ENCODE measurements at regions of chr9 and their contacts with region 1.

Region 1: DNA sequence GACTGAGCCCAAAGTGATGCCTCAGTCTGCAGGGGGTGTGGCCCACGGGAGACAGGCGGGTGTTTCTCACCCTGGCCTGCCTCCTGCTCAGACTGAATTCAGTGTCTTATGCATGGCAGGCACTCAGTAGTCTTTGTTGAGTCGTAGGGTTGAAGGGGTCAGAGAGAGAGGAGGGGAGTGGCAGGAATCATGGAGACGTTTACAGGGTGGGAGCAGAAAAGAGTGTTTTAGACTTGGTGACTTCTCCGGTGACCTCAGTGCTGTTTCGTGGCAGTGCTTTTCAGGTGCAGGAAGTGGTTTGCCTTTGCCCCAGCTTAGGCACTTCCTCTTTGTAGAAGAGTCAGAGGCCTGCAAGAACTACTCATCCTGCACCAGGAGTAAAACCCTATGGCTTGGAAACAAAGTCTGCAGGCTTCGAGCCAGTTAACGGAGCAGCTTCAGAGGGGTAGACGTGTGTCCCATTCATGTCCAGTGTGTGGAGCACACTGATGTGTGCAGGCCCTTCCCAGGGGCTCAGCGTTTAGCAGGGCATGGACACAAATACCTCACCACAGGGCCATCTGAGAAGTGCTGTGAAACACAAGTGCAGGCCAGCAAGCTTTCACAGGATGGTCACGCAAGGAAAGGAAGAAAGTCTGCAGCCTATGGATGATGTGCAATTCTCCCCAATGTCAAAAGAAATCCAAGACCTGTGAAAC is 24.5 kb upstream of the SEMA4D start:
- DNase-seq: peak; percentile 68
- ATAC-seq: peak; percentile 87
- H3K4me3 Mint-ChIP-seq: peak overlapping the region; percentile 74
- H3K27ac Mint-ChIP-seq: peak overlapping the region; percentile 98
- H3K4me1 Mint-ChIP-seq: peaks cover 78% of the 10 kb centered on the region
- H3K27me3 Mint-ChIP-seq: no peaks in the 10 kb centered on the region

Region 2: GRCh38 chr9:89466451-89467277 is 55.7 kb before region 1 on chr9:
- POLR2A ChIA-PET with region 1: no interaction called
- DNase-seq: peak; percentile 48
- ATAC-seq: peak; percentile 8
- H3K4me3 Mint-ChIP-seq: peak overlapping the region; percentile 67
- H3K27ac Mint-ChIP-seq: peak overlapping the region; percentile 89
- H3K4me1 Mint-ChIP-seq: peaks cover 94% of the 10 kb centered on the region
- H3K27me3 Mint-ChIP-seq: no peaks in the 10 kb centered on the region

Region 3: GRCh38 chr9:89477811-89478630 is 44.4 kb before region 1 on chr9:
- POLR2A ChIA-PET with region 1: interaction called, 11 read pairs
- DNase-seq: peak; percentile 47
- ATAC-seq: peak; percentile 29
- H3K4me3 Mint-ChIP-seq: peak overlapping the region; percentile 82
- H3K27ac Mint-ChIP-seq: peak overlapping the region; percentile 96
- H3K4me1 Mint-ChIP-seq: peaks cover 80% of the 10 kb centered on the region
- H3K27me3 Mint-ChIP-seq: no peaks in the 10 kb centered on the region

Region 4: DNA sequence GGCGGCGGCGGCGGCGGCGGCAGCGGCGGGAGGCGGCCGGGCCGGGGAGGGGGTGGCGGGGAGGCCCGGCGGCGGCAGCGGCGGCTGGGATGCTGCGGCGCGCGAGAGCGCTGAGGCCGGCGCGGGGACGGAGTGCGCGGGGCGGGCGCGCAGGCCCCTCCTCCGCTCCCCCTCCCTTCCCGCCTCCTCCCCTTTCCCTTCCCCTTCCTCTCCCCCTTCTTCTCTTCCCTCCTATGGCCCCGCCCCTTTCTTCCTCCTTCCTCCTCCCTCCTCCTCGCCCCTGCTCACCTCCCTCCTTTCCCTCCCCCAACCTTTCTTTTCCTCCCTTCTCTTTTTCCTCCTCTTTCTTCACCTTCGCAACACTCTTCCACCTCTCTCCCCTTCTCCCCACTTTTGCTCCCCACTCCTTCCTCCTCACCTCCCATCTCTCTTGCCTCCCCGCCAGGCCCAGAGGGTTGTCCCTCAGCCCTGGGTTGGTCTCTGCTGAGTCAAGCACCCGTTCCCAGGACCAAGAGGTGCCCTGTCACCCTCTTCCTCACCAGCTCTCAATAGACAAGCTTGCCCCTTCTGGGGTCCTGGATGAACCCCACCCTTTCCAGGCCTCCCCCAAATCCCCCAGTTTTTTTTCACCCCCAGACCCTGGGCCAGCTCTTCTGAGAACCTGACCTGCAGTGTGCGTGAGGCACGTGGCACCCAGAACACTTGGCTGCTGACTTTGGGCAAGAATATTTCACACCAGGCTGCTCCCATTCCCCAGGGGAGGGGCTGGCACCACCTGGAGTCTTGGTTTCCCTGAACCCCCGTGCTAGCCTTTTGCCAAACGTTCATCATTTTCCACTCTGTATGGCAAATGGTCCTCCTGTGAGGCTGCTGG is 24.2 kb before region 1 on chr9 and contains the start of gene SEMA4D:
- POLR2A ChIA-PET with region 1: interaction called, 49 read pairs
- DNase-seq: peak; percentile 67
- ATAC-seq: peak; percentile 3
- H3K4me3 Mint-ChIP-seq: peak within 1 kb of the TSS; percentile 90
- H3K27ac Mint-ChIP-seq: peak within 1 kb of the TSS; percentile 96
- H3K4me1 Mint-ChIP-seq: peaks cover 71% of the 10 kb centered on the region
- H3K27me3 Mint-ChIP-seq: no peaks in the 10 kb centered on the region
- total RNA-seq, gene SEMA4D: 370 to 391 TPM

Region 5: GRCh38 chr9:89508951-89509615 is 13.3 kb before region 1 on chr9:
- POLR2A ChIA-PET with region 1: interaction called, 11 read pairs
- DNase-seq: no peak
- ATAC-seq: no peak
- H3K4me3 Mint-ChIP-seq: no peak overlapping the region
- H3K27ac Mint-ChIP-seq: peak overlapping the region; percentile 57
- H3K4me1 Mint-ChIP-seq: peaks cover 42% of the 10 kb centered on the region
- H3K27me3 Mint-ChIP-seq: no peaks in the 10 kb centered on the region

Region 6: DNA sequence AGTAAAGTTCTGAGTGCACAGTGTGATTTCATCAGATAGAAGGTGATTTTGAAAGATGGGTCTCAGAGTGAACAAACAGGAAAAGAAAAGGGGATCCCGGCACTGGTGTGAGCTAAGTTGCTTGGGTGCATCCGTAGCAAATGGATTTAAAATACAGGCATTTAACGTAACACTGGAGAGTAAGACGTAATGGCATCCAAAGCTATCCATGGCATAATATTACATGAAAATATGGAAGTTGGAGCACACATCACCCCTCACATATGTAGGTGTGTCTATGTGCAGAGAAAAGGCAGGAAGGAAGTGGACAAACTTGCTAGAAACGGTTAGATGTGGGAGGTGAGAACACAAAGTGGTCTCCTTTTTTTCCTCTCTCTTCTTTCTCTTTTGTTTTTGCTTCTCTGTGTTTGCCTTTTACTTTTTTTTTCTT is 13.8 kb after region 1 on chr9:
- POLR2A ChIA-PET with region 1: interaction called, 35 read pairs
- DNase-seq: no peak
- ATAC-seq: peak; percentile 75
- H3K4me3 Mint-ChIP-seq: peak overlapping the region; percentile 76
- H3K27ac Mint-ChIP-seq: peak overlapping the region; percentile 88
- H3K4me1 Mint-ChIP-seq: peaks cover 82% of the 10 kb centered on the region
- H3K27me3 Mint-ChIP-seq: no peaks in the 10 kb centered on the region

Region 7: DNA sequence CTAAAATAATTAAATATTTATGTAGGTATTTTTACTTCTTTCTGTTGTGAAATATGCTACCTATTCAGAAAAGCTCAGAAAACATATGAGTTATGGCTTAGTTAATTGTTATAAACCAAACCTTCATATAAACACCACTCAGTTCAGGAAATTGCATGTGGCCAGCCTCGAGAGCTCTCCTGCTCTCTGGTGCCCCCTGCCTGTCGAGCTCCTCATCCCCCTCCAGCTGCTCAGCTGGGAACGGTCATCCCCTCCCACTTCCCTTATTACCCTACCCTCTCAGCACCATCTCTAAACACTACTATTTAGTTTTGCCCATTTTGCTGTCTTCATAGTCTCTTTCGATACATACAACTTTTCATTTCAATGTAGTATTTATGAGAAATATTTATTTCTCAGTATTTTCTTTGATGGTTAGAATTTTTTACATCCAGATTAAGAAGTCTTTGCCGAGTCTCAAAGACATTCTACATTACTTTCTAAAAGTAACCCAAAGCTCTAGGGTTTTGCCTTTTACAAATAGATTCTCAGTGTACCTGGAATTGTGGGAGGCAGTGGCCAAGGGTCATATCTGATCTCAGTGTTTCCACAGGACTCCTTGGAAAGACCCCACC is 26.7 kb after region 1 on chr9:
- POLR2A ChIA-PET with region 1: interaction called, 11 read pairs
- DNase-seq: peak; percentile 88
- ATAC-seq: peak; percentile 96
- H3K4me3 Mint-ChIP-seq: no peak overlapping the region
- H3K27ac Mint-ChIP-seq: peak overlapping the region; percentile 46
- H3K4me1 Mint-ChIP-seq: peaks cover 15% of the 10 kb centered on the region
- H3K27me3 Mint-ChIP-seq: peaks cover 7% of the 10 kb centered on the region

Measured in activated naive CD8-positive, alpha-beta T cell treated with anti-CD3 and anti-CD28 coated beads, Interleukin-2, amount 10 ng/mL, durations not matched to agents 7 days and 5 days (primary cell).